GM12878 (cell line): ENCODE measurements at regions of chr11 and their contacts with region 1.

Region 1: GRCh38 chr11:46392421-46393230 is 1.1 kb upstream of the CHRM4 start:
- DNase-seq: no peak
- ATAC-seq: peak; percentile 85
- H3K4me3 ChIP-seq: peak overlapping the region; percentile 57; the same call in 1 of the 2 replicates
- H3K27ac ChIP-seq: no peak overlapping the region
- H3K4me1 ChIP-seq: peaks cover 6% of the 10 kb centered on the region
- H3K27me3 ChIP-seq: peaks cover 12 to 13% of the 10 kb centered on the region in 2 experiments
- CTCF ChIP-seq: no peak
- EP300 ChIP-seq: no peak
- POLR2A ChIP-seq: no peak
- RAD21 ChIP-seq: no peak

Region 2: GRCh38 chr11:46352063-46352841 is 40.4 kb before region 1 on chr11:
- CTCF ChIA-PET with region 1: interaction called, 18 read pairs
- POLR2A ChIA-PET with region 1: no interaction called
- RAD21 ChIA-PET with region 1: interaction called, 13 read pairs
- SMC1A ChIA-PET with region 1: interaction called, 6 read pairs
- in situ Hi-C with region 1: no loop called
- intact Hi-C with region 1: no loop called
- DNase-seq: no peak
- ATAC-seq: peak; percentile 29
- H3K4me3 ChIP-seq: no peak overlapping the region
- H3K27ac ChIP-seq: no peak overlapping the region
- H3K4me1 ChIP-seq: peaks cover 30% of the 10 kb centered on the region
- H3K27me3 ChIP-seq: no peaks in the 10 kb centered on the region
- CTCF ChIP-seq: peak; percentile 86 to 97 (median 87)
- EP300 ChIP-seq: no peak
- POLR2A ChIP-seq: no peak
- RAD21 ChIP-seq: peak; percentile 50

Region 3: GRCh38 chr11:46475926-46476545 is 83.4 kb after region 1 on chr11:
- CTCF ChIA-PET with region 1: interaction called, 20 read pairs
- POLR2A ChIA-PET with region 1: interaction called, 4 read pairs
- RAD21 ChIA-PET with region 1: interaction called, 3 read pairs
- SMC1A ChIA-PET with region 1: interaction called, 3 read pairs
- in situ Hi-C with region 1: no loop called
- intact Hi-C with region 1: no loop called
- DNase-seq: peak; percentile 28
- ATAC-seq: peak; percentile 73
- H3K4me3 ChIP-seq: no peak overlapping the region
- H3K27ac ChIP-seq: no peak overlapping the region
- H3K4me1 ChIP-seq: peaks cover 15% of the 10 kb centered on the region
- H3K27me3 ChIP-seq: no peaks in the 10 kb centered on the region
- CTCF ChIP-seq: no peak
- EP300 ChIP-seq: no peak
- POLR2A ChIP-seq: no peak
- RAD21 ChIP-seq: no peak

Region 4: GRCh38 chr11:46521961-46522681 is 129.5 kb after region 1 on chr11:
- CTCF ChIA-PET with region 1: interaction called, 14 read pairs
- POLR2A ChIA-PET with region 1: no interaction called
- RAD21 ChIA-PET with region 1: interaction called, 8 read pairs
- SMC1A ChIA-PET with region 1: interaction called, 4 read pairs
- in situ Hi-C with region 1: no loop called
- intact Hi-C with region 1: no loop called
- DNase-seq: no peak
- ATAC-seq: peak; percentile 77
- H3K4me3 ChIP-seq: no peak overlapping the region
- H3K27ac ChIP-seq: peak overlapping the region; percentile 50
- H3K4me1 ChIP-seq: peaks cover 14% of the 10 kb centered on the region
- H3K27me3 ChIP-seq: no peaks in the 10 kb centered on the region
- CTCF ChIP-seq: peak; percentile 26 to 46 (median 29); a peak in 4 of 6 replicates
- EP300 ChIP-seq: no peak
- POLR2A ChIP-seq: no peak
- RAD21 ChIP-seq: peak; percentile 58

Region 5: GRCh38 chr11:46616998-46617675 is 224.5 kb after region 1 on chr11 and contains the starts of genes ATG13 and HARBI1:
- CTCF ChIA-PET with region 1: interaction called, 31 read pairs
- POLR2A ChIA-PET with region 1: no interaction called
- RAD21 ChIA-PET with region 1: interaction called, 6 read pairs
- SMC1A ChIA-PET with region 1: interaction called, 6 read pairs
- in situ Hi-C with region 1: no loop called
- intact Hi-C with region 1: loop called (anchors 2 kb)
- DNase-seq: peak; percentile 55
- ATAC-seq: peak; percentile 98
- H3K4me3 ChIP-seq: peak within 1 kb of the TSS; percentile 82
- H3K27ac ChIP-seq: peak within 1 kb of the TSS; percentile 99
- H3K4me1 ChIP-seq: peaks cover 7% of the 10 kb centered on the region; the same call in 1 of the 2 replicates
- H3K27me3 ChIP-seq: no peaks in the 10 kb centered on the region
- CTCF ChIP-seq: no peak
- EP300 ChIP-seq: peak in 1 of 2 experiments; percentile 100; a peak in 2 of 4 replicates
- POLR2A ChIP-seq: peak; percentile 85
- RAD21 ChIP-seq: no peak
- polyA plus RNA-seq, gene ATG13: 10.9 to 13.6 TPM
- polyA plus RNA-seq, gene HARBI1: 5.1 to 7.5 TPM